HAP-1 (cell line): ENCODE measurements at regions of chr12 and their contacts with region 1.

Region 1: GRCh38 chr12:93390549-93391297 is 13.0 kb downstream of the NUDT4 start:
- DNase-seq: no peak
- H3K4me3 ChIP-seq: no peak overlapping the region
- H3K4me1 ChIP-seq: no peaks in the 10 kb centered on the region
- H3K27me3 ChIP-seq: no peaks in the 10 kb centered on the region

Region 2: GRCh38 chr12:93109551-93110203 is 281.0 kb before region 1 on chr12:
- in situ Hi-C with region 1: loop called (anchors 10 kb)
- DNase-seq: no peak
- H3K4me3 ChIP-seq: no peak overlapping the region
- H3K4me1 ChIP-seq: peaks cover 41% of the 10 kb centered on the region
- H3K27me3 ChIP-seq: no peaks in the 10 kb centered on the region